ENCODE measurements at regions of chr1 and their contacts with region 1.

Region 1: DNA sequence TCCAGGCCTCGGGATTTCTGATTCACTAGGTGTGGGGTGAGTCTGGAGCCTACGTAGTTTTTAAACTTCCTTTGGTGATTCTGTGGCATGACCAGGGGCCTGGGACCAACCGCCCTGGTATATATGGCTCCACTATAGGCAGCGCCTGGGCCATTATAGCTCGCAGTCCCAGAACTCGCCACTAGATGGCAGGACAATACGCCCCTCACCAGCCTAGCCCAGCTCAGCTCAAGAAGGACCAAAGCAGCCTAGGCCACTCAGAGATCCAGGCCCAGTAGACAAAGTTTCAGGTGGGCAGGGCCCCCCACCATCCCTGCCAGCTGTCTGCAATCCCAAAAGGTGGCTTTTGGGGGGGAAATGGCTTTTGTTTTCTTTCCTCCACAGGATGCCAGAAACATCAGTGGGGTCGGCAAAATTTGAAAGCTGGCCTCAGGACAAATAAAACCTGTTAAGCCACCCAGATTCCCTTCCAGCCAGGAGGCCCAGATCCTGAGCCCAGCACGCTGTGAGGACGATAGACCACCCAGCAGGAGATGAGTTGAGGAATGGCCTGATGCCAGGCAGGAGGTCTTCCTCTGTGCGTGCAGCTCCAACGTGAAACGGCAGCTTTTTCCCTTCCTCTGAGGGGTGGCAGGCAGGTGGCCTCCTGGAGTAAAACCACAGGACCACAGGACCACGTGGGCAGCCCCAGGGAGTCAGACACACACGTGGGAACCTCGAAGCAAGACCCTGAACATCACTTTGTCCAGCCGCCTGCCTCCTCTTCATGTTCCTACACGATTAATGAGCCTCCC is 24.8 kb upstream of the TMEM51 start:
- DNase-seq: peak; percentile 55 to 85 (median 73)
- ATAC-seq: peak; percentile 99
- H3K4me3 ChIP-seq: no peak overlapping the region
- H3K27ac ChIP-seq: no peak overlapping the region
- H3K4me1 ChIP-seq: no peaks in the 10 kb centered on the region
- H3K27me3 ChIP-seq: no peaks in the 10 kb centered on the region
- CTCF ChIP-seq: peak; percentile 66 to 90

Region 2: GRCh38 chr1:14804626-14805025 is 324.1 kb before region 1 on chr1:
- intact Hi-C with region 1: no loop called
- DNase-seq: no peak
- ATAC-seq: no peak
- H3K4me3 ChIP-seq: no peak overlapping the region
- H3K27ac ChIP-seq: no peak overlapping the region
- H3K4me1 ChIP-seq: no peaks in the 10 kb centered on the region
- H3K27me3 ChIP-seq: no peaks in the 10 kb centered on the region
- CTCF ChIP-seq: no peak

Region 3: DNA sequence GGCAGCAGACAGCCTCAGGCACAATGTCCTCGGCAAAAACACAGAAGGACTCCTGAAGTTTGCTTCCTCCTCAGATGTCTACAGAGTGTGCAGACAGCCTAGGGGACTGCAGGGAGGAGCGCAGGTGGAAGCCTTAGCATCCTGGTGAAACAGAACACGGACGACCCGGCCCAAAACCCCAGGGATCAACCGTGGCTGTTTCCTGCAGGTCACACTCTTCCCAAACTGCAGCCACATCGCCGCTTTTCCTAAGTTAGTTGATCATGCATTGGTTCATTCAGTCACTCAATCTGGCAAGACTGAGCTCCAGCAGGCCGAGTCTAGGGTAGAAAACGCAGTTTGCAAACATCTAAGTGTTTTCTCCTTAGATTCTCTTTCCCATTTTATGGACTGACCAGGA is 151.7 kb after region 1 on chr1:
- intact Hi-C with region 1: no loop called
- DNase-seq: no peak
- ATAC-seq: no peak
- H3K4me3 ChIP-seq: no peak overlapping the region
- H3K27ac ChIP-seq: no peak overlapping the region
- H3K4me1 ChIP-seq: peaks cover 3 to 4% of the 10 kb centered on the region in 2 donors
- H3K27me3 ChIP-seq: no peaks in the 10 kb centered on the region
- CTCF ChIP-seq: no peak

Region 4: GRCh38 chr1:15304701-15305467 is 176.2 kb after region 1 on chr1:
- intact Hi-C with region 1: loop called in 1 of 2 experiments (anchors 10 kb)
- DNase-seq: peak in 3 of 4 donors; percentile 59 to 89 (median 60)
- ATAC-seq: peak; percentile 89
- H3K4me3 ChIP-seq: no peak overlapping the region
- H3K27ac ChIP-seq: no peak overlapping the region
- H3K4me1 ChIP-seq: no peaks in the 10 kb centered on the region
- H3K27me3 ChIP-seq: no peaks in the 10 kb centered on the region
- CTCF ChIP-seq: peak; percentile 81 to 83

Measured in left lung (tissue), 14 donors.